ENCODE measurements at regions of chr1 and their contacts with region 1.

Region 1: DNA sequence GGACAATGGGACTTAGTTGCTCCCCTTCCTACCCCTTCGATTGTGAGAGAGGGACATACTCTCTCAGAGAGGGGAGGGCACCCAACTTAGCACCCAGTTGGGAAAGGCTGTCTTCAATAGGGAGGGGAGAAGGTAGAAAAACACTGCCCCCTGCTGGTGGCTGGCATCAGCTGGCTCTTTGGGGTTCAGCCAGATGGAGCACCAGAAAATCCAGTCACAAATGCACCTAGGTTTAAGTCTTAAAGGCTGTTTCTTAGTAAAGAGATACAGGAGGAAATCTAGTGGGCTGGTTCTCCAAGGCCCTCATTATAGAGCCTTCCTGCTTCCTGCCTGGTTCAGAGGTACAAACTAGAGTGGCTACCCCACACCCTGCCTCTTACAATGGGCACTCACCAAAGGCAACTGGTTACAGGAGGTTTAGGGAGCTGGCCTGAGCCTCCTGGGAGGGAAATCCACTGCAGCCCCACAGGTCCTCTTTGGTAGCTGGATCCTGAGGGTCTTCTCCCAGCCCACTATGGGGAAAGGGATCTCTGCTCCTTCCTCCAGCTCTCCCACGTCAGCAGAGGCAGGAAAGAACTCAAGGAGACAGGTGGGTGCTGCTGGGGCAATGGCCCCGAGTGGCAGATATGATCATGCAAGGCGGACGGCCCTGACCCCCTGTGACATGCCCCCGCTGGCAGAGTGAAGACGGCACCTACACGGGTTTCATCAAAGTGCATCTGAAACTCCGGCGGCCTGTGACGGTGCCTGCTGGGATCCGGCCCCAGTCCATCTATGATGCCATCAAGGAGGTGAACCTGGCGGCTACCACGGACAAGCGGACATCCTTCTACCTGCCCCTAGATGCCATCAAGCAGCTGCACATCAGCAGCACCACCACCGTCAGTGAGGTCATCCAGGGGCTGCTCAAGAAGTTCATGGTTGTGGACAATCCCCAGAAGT is 28.3 kb downstream of the EIF2D start:
- DNase-seq: peak; percentile 89

Region 2: DNA sequence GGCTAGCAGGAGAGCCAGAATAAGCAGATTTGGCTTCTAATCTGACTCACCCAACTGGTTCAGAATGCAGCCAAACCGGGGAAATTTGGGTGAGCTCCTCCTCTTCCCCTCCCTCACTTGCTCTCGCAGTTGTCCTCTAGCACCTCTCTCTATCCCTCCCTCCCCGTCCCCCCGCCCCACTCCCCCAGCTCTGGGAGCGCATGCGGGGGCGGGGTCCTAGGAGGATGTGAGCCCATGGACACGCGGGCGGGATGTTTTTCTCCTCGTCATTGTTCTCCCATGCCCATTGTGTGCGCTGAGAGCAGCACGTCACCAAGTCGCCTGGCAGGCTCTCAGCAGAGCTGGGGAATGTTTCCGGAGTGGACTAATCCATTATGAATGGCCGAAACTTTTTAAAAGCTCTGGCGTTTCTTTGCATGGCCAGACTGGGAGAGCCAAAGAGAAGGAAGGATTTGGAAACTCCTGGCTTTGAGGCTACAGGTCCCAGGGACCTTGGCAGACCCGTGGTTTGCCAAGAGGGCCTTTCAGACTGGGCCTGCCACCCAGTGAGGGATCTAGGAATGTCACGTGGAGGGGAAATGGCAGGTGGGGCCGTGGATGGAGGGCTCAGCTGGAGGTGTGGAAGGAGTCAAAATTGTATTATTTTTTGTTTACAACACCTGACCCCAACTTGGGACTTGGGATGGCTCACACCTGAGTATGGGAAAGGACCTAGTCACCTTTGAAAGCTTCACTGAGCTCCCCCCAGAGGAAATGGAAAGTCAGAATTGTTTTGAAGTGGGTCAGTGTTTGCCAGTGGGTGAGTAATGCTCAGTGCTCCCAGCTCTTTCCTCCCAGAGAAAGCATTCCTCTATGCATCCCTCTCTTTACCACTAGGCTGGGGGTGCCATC is 1040.3 kb before region 1 on chr1:
- in situ Hi-C with region 1: no loop called
- DNase-seq: peak; percentile 51

Region 3: DNA sequence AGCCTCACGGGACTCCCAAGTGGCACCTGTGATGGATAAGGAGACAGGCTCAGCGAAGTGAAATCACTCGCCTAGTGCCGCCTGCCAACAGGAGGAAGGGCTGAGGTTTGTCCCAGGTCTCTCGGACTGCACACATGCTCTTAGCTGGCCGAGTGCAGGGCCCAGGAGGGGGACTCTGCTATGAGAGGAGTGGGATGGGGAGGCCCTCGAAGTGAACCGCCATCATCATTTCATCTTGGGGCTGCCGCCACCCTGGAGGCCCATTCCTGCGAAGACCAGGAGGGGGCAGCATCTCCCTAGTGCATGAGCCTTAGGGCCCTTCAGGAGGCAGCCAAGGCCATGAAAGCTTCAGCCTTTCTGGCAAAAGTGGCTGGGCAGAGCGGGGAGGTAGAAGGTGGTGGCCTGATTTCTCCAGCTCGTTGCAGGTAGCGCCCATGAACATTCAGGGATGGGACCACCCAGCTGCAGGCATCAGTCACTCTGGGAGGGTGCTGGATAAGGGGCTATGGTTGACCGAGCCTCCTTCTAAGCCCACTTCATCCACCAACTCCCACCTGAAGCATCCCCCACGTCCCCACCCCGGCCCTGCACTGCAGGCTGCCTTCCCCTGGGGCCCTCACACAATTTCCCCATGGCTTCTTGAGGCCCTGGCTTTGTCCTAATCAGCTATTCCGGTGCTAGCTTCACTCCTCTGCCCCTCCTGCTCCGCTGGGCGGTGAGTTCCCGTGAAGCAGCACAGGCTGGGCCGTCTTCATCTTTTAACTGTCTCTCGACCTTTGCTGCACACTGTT is 93.8 kb before region 1 on chr1:
- in situ Hi-C with region 1: loop called (anchors 10 kb)
- DNase-seq: peak; percentile 75

Region 4: GRCh38 chr1:207115269-207115668 is 531.3 kb after region 1 on chr1:
- in situ Hi-C with region 1: no loop called
- DNase-seq: no peak

Measured in KBM-7 (cell line).